Ovary (tissue), 10 donors: ENCODE measurements at regions of chrX and their contacts with region 1.

Region 1: GRCh38 chrX:24498975-24499374 is 33.9 kb downstream of the PDK3 start:
- DNase-seq: no peak
- H3K4me3 ChIP-seq: no peak overlapping the region
- H3K27ac ChIP-seq: no peak overlapping the region
- H3K4me1 ChIP-seq: no peaks in the 10 kb centered on the region
- H3K27me3 ChIP-seq: no peaks in the 10 kb centered on the region
- CTCF ChIP-seq: peak in 1 of 3 donors; percentile 42
- EP300 ChIP-seq: no peak
- POLR2A ChIP-seq: no peak

Region 2: GRCh38 chrX:24395775-24396174 is 103.2 kb before region 1 on chrX:
- intact Hi-C with region 1: loop called in 1 of 4 experiments (anchors 10 kb)
- DNase-seq: peak in 1 of 5 donors; percentile 58
- H3K4me3 ChIP-seq: no peak overlapping the region
- H3K27ac ChIP-seq: peak overlapping the region in 1 of 2 donors; percentile 44
- H3K4me1 ChIP-seq: peaks cover 2% of the 10 kb centered on the region
- H3K27me3 ChIP-seq: no peaks in the 10 kb centered on the region
- CTCF ChIP-seq: peak; percentile 38 to 85 (median 79)
- EP300 ChIP-seq: no peak
- POLR2A ChIP-seq: no peak